Activated CD4-positive, alpha-beta T cell treated with anti-CD3 and anti-CD28 coated beads, Interleukin-2, amount 10 ng/mL, durations not matched to agents 7 days and 5 days (primary cell): ENCODE measurements at regions of chr6 and their contacts with region 1.

Region 1: GRCh38 chr6:149129371-149130077 is 188.0 kb upstream of the TAB2 start:
- DNase-seq: no peak
- H3K4me3 Mint-ChIP-seq: no peak overlapping the region
- H3K27ac Mint-ChIP-seq: peak overlapping the region; percentile 94
- H3K4me1 Mint-ChIP-seq: peaks cover 80% of the 10 kb centered on the region
- H3K27me3 Mint-ChIP-seq: no peaks in the 10 kb centered on the region

Region 2: DNA sequence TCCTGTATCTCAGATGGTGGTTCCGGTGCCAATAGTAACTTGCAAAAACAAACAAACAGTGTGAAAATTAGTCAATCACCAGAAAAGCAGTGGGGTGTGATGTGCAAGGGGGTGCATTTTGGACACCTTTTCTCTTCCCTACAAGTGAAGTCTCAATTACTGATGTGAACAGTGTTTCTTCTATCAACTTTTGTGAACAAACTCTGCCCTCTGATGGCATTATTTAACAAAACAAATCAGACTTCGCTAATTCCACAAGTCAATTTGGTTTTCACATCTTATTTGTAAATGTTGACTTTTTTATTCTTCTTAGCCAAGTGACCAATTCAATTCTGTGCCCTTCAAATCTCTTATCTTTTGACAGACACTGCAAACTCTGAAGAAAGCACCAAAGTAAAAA is 170.5 kb before region 1 on chr6:
- CTCF ChIA-PET with region 1: no interaction called
- POLR2A ChIA-PET with region 1: no interaction called
- DNase-seq: no peak
- H3K4me3 Mint-ChIP-seq: no peak overlapping the region
- H3K27ac Mint-ChIP-seq: no peak overlapping the region
- H3K4me1 Mint-ChIP-seq: no peaks in the 10 kb centered on the region
- H3K27me3 Mint-ChIP-seq: peaks cover 1% of the 10 kb centered on the region

Region 3: GRCh38 chr6:149112976-149113375 is 16.5 kb before region 1 on chr6:
- CTCF ChIA-PET with region 1: interaction called, 18 read pairs
- POLR2A ChIA-PET with region 1: no interaction called
- DNase-seq: no peak
- H3K4me3 Mint-ChIP-seq: no peak overlapping the region
- H3K27ac Mint-ChIP-seq: no peak overlapping the region
- H3K4me1 Mint-ChIP-seq: peaks cover 64% of the 10 kb centered on the region
- H3K27me3 Mint-ChIP-seq: no peaks in the 10 kb centered on the region